Right cardiac atrium (tissue), 5 donors: ENCODE measurements at regions of chr6 and their contacts with region 1.

Region 1: GRCh38 chr6:56637640-56638039 is 5.0 kb downstream of the DST start:
- DNase-seq: no peak
- ATAC-seq: peak; percentile 59 to 74
- H3K4me3 ChIP-seq: no peak overlapping the region
- H3K27ac ChIP-seq: no peak overlapping the region
- H3K4me1 ChIP-seq: no peaks in the 10 kb centered on the region
- H3K27me3 ChIP-seq: no peaks in the 10 kb centered on the region

Region 2: DNA sequence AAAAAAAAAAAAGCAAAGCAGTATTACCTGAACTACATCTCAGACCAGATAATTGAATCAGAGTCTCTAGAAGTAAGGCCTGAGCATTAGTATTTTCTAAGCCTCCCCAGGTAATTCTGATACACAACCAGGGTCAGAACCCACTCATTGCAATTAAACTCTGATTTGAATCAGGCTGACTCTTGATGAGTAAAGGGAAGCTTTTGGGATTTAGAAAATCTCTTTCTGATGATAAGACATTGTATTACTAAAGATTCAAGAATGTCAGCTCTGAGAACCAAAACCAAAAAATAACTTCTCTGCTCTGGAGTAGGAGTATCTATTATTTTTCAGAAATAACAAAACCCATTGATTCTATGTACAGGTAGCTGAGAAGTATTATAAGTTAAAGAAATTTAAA is 290.1 kb before region 1 on chr6:
- intact Hi-C with region 1: no loop called
- DNase-seq: no peak
- ATAC-seq: no peak
- H3K4me3 ChIP-seq: no peak overlapping the region
- H3K27ac ChIP-seq: no peak overlapping the region
- H3K4me1 ChIP-seq: no peaks in the 10 kb centered on the region
- H3K27me3 ChIP-seq: no peaks in the 10 kb centered on the region

Region 3: GRCh38 chr6:56693246-56693607 is 55.6 kb after region 1 on chr6:
- intact Hi-C with region 1: loop called (anchors 2 to 5 kb)
- DNase-seq: peak; percentile 88 to 97 (median 92)
- ATAC-seq: peak; percentile 86 to 87
- H3K4me3 ChIP-seq: peak overlapping the region; percentile 70
- H3K27ac ChIP-seq: peak overlapping the region; percentile 78
- H3K4me1 ChIP-seq: no peaks in the 10 kb centered on the region
- H3K27me3 ChIP-seq: no peaks in the 10 kb centered on the region

Region 4: GRCh38 chr6:56699066-56699654 is 61.5 kb after region 1 on chr6:
- intact Hi-C with region 1: loop called (anchors 2 to 5 kb)
- DNase-seq: no peak
- ATAC-seq: peak in 1 of 2 donors; percentile 59
- H3K4me3 ChIP-seq: no peak overlapping the region
- H3K27ac ChIP-seq: no peak overlapping the region
- H3K4me1 ChIP-seq: no peaks in the 10 kb centered on the region
- H3K27me3 ChIP-seq: no peaks in the 10 kb centered on the region

Region 5: DNA sequence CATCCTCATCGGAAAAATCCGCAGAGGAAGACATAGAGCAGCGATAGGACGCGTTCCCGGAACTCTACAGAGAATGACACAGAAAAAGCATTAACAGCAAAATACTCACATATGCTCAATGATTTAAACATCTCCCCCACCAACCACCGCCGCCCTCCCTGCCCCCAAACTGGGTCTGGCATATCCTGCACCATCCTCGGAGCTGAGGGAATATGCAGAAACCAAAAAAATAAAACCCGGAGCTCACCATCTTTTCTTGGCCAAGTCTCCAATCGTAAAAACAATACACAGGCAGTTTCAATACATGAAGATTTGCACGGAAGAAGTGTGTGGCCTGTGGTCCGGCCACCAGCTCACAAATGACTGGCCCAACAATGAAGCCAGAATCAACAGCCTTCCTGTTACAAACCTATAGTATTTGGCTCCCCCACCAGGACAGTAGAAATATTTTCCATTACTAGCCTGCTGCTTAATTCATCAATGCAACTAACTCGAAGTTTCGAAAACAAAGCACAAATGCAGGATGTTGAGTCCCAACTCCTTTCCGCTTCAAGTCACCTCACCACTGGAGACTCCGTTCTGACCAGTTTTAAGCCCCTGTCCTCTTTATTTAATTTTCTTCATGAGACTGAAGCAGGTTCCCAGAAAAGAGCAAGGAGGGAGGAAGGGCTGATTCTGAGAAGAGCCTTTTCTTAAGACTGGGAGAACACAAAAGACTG is 214.1 kb after region 1 on chr6:
- intact Hi-C with region 1: loop called in 3 of 4 experiments (anchors 5 to 10 kb)
- DNase-seq: peak; percentile 34 to 58 (median 53)
- ATAC-seq: peak; percentile 81 to 89
- H3K4me3 ChIP-seq: peak overlapping the region; percentile 94
- H3K27ac ChIP-seq: peak overlapping the region; percentile 72
- H3K4me1 ChIP-seq: peaks cover 2% of the 10 kb centered on the region
- H3K27me3 ChIP-seq: no peaks in the 10 kb centered on the region